ENCODE measurements at regions of chr4 and their contacts with region 1.

Region 1: GRCh38 chr4:128809477-128810330 is at the start of gene JADE1:
- DNase-seq: peak; percentile 95
- H3K4me3 ChIP-seq: peak within 1 kb of the TSS; percentile 60 to 86 (median 74)
- H3K27ac ChIP-seq: peak within 1 kb of the TSS; percentile 92 to 98 (median 96)
- H3K4me1 ChIP-seq: peaks cover 0 to 15% (median 7%) of the 10 kb centered on the region in 4 donors
- H3K27me3 ChIP-seq: no peaks in the 10 kb centered on the region
- CTCF ChIP-seq: peak; percentile 48 to 73 (median 61)
- EP300 ChIP-seq: no peak
- POLR2A ChIP-seq: peak; percentile 49
- total RNA-seq, gene JADE1: 7.8 to 15.9 (median 13.9) TPM

Region 2: DNA sequence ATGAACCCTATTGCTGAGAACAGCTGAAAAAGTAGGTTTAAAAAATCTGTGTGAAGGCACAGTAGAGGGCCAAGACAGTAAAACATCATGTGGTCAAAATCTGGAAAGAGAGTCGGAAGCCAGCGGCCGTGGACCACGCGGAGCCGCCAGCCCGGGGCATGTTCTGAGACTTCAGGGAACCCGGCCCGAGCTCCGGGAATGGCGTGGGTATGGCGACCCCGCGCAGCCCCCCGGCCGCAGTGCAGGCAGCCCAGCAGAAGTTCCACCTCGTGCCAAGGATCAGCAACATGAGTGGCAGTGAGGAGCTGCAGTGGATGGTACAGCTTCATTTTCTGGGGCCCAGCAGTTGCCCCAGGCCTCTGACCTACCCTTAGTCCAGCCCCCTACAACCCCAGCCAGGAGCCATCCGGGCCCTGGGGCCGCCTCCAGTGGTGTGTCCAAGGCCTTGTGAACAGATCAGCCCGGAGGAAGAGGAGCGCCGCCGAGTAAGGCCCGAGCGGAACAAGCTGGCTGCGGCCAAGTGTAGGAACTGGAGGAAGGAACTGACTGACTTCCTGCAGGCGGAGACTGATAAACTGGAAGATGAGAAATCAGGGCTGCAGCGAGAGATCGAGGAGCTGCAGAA is 654.4 kb before region 1 on chr4:
- in situ Hi-C with region 1: no loop called
- intact Hi-C with region 1: no loop called
- DNase-seq: no peak
- H3K4me3 ChIP-seq: no peak overlapping the region
- H3K27ac ChIP-seq: no peak overlapping the region
- H3K4me1 ChIP-seq: no peaks in the 10 kb centered on the region
- H3K27me3 ChIP-seq: no peaks in the 10 kb centered on the region
- CTCF ChIP-seq: no peak
- EP300 ChIP-seq: no peak
- POLR2A ChIP-seq: no peak

Region 3: GRCh38 chr4:128287871-128288688 is 521.6 kb before region 1 on chr4:
- in situ Hi-C with region 1: loop called in 1 of 4 experiments (anchors 25 kb)
- intact Hi-C with region 1: no loop called
- DNase-seq: peak; percentile 100
- H3K4me3 ChIP-seq: peak overlapping the region; percentile 10 to 98 (median 78)
- H3K27ac ChIP-seq: peak overlapping the region; percentile 90 to 96 (median 92)
- H3K4me1 ChIP-seq: peaks cover 6 to 41% (median 17%) of the 10 kb centered on the region in 4 donors
- H3K27me3 ChIP-seq: no peaks in the 10 kb centered on the region
- CTCF ChIP-seq: peak; percentile 32 to 74 (median 39)
- EP300 ChIP-seq: no peak
- POLR2A ChIP-seq: peak; percentile 79

Region 4: DNA sequence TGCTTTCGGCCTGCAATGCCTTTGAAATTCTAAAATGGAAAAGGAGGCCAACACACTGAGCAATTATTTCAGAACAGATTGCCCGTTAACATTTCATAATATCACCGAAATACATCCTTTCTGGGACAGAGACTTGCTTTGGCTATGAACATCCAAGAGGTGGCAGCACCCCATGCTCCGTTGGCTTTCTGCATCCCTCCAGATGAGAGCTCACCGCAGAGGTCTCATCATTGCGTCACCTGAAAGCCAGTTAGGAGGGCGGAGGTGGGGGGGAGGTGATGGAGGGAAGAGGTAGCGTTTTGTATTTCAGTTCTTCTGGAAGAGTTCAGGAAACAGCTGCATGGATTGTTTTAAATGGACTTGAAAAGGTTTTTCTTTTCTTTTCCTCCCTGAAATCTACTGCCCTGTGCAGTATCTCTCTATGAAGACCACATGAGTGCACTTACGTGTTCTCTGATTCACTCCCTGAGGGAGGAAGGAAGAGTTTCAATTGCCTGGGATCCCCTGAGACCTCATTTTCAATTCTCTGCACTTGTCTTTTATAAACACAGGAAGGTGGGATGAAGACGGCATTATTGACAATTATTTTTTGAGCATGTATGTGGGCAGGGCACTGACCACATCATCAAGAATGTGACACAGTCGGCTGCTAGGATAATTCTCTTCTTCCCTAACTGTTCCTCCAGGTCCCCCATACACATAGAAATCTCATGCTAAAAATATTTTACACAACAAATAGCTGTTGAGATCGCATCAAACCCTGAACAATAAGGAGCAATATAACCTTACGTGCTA is 355.2 kb before region 1 on chr4:
- in situ Hi-C with region 1: loop called in 1 of 4 experiments (anchors 25 kb)
- intact Hi-C with region 1: loop called (anchors 10 kb)
- DNase-seq: peak; percentile 73
- H3K4me3 ChIP-seq: no peak overlapping the region
- H3K27ac ChIP-seq: no peak overlapping the region
- H3K4me1 ChIP-seq: peaks cover 0 to 10% (median 0%) of the 10 kb centered on the region in 4 donors
- H3K27me3 ChIP-seq: no peaks in the 10 kb centered on the region
- CTCF ChIP-seq: peak; percentile 66 to 72 (median 69)
- EP300 ChIP-seq: no peak
- POLR2A ChIP-seq: no peak

Region 5: DNA sequence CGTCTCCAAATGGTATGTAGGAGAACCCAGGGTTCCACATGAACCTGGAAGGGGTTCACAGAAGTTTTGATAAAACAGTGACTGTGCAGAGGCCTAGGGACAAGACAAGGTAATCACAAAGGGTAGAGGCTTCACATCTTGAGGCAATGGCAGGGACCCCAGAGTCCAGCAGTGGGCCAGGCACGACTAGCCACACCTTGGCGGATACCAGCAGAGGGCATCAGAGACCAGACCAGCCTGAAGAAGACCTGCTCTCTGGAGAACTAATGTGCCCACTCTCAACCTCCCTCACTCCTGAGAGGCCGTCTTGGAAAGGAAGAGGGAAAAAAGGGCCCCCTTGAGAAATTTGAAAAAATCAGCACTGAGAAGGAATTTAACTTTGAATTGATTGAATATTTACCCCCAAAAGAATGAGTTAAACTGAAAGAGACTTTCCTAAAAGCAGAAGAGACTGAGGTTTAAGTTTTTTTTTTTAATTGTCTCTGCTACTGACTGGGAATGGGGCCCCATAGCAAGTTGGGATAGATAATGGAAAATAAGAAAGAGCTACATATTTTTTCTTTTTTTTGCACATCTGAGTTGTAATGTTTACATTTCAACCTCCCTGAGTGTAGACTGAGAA is 244.0 kb before region 1 on chr4:
- in situ Hi-C with region 1: loop called in 1 of 4 experiments (anchors 10 kb)
- intact Hi-C with region 1: loop called (anchors 5 kb)
- DNase-seq: peak; percentile 54
- H3K4me3 ChIP-seq: no peak overlapping the region
- H3K27ac ChIP-seq: no peak overlapping the region
- H3K4me1 ChIP-seq: peaks cover 4 to 10% (median 5%) of the 10 kb centered on the region in 4 donors
- H3K27me3 ChIP-seq: no peaks in the 10 kb centered on the region
- CTCF ChIP-seq: peak; percentile 54 to 63 (median 57)
- EP300 ChIP-seq: no peak
- POLR2A ChIP-seq: no peak

Region 6: GRCh38 chr4:128574706-128575105 is 235.0 kb before region 1 on chr4:
- in situ Hi-C with region 1: loop called in 2 of 4 experiments (anchors 10 to 25 kb)
- intact Hi-C with region 1: loop called (anchors 5 kb)
- DNase-seq: peak; percentile 84
- H3K4me3 ChIP-seq: no peak overlapping the region
- H3K27ac ChIP-seq: no peak overlapping the region
- H3K4me1 ChIP-seq: peaks cover 0 to 29% (median 10%) of the 10 kb centered on the region in 4 donors
- H3K27me3 ChIP-seq: no peaks in the 10 kb centered on the region
- CTCF ChIP-seq: peak; percentile 57 to 65 (median 64)
- EP300 ChIP-seq: no peak
- POLR2A ChIP-seq: no peak

Region 7: GRCh38 chr4:129093191-129093920 is 283.7 kb after region 1 on chr4 and contains the start of gene SCLT1:
- in situ Hi-C with region 1: loop called in 1 of 4 experiments (anchors 25 kb)
- intact Hi-C with region 1: no loop called
- DNase-seq: peak; percentile 100
- H3K4me3 ChIP-seq: peak within 1 kb of the TSS; percentile 64 to 78 (median 68)
- H3K27ac ChIP-seq: peak within 1 kb of the TSS; percentile 96 to 97 (median 96)
- H3K4me1 ChIP-seq: peaks cover 7 to 49% (median 14%) of the 10 kb centered on the region in 4 donors
- H3K27me3 ChIP-seq: no peaks in the 10 kb centered on the region
- CTCF ChIP-seq: no peak
- EP300 ChIP-seq: no peak
- POLR2A ChIP-seq: peak; percentile 95
- total RNA-seq, gene SCLT1: 10.1 to 29.9 (median 14.3) TPM